MCF 10A (cell line): ENCODE measurements at regions of chr2 and their contacts with region 1.

Region 1: GRCh38 chr2:112836695-112837117 is at the start of gene IL1B:
- DNase-seq: peak; percentile 87
- H3K4me3 Mint-ChIP-seq: peak within 1 kb of the TSS; percentile 46
- H3K27ac Mint-ChIP-seq: peak within 1 kb of the TSS; percentile 60
- H3K4me1 Mint-ChIP-seq: peaks cover 50% of the 10 kb centered on the region
- H3K27me3 Mint-ChIP-seq: no peaks in the 10 kb centered on the region
- CTCF ChIP-seq: no peak
- total RNA-seq, gene IL1B: 5.4 and 5.5 TPM in 2 replicates

Region 2: DNA sequence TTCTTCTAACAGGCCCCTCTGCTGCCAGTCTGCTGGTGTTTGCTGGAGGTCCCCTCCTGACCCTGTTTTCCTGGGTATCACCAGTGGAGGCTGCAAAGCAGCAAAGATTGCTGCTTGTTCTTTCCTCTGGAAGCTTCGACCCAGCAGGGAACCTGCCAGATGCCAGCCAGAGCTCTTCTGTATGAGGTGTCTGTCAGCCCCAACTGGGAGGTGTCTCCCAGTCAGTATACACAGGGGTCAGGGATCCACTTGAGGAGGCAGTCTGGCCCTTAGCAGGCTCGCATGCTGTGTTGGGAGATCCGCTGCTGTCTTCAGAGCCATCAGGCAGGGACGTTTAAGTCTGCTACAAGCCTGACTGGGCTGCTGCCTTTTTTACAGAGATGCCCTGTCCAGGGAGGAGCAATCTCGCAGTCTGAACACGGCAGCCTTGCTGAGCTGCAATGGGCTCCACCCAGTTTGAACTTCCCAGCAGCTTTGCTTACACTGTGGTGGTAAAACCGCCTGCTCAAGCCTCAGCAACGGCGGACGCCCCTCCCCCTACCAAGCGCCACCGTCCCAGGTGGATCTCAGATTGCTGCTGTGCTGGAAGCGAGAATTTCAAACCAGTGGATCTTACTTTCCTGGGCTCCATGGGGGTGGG is 222.4 kb before region 1 on chr2:
- CTCF ChIA-PET with region 1: no interaction called
- POLR2A ChIA-PET with region 1: no interaction called
- intact Hi-C with region 1: no loop called
- DNase-seq: no peak
- H3K4me3 Mint-ChIP-seq: no peak overlapping the region
- H3K27ac Mint-ChIP-seq: no peak overlapping the region
- H3K4me1 Mint-ChIP-seq: no peaks in the 10 kb centered on the region
- H3K27me3 Mint-ChIP-seq: no peaks in the 10 kb centered on the region
- CTCF ChIP-seq: no peak

Region 3: DNA sequence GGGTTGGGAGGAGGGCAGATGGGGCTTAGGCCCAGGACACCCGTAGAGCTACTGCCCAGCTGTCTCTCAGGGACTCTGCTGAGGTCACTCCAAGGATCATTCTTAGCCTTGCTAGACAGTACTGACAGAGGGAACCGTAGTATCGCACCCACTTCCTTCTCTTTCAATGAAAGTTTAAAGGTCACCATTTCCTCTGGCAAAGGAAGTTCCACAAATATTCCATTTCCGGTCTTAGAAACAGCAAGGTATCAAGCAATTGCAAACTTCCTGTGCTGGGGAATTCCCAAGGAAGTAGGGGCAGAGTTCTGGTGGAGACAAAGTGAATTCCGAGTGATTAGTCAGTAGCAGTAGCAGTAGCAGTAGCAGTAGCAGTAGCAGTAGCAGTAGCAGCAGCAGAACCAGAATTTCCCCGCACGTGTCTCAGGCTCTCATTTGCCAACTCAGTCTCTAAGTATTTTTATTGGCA is 24.8 kb before region 1 on chr2:
- CTCF ChIA-PET with region 1: interaction called, 4 read pairs
- POLR2A ChIA-PET with region 1: interaction called, 20 read pairs
- intact Hi-C with region 1: no loop called
- DNase-seq: peak; percentile 82
- H3K4me3 Mint-ChIP-seq: no peak overlapping the region
- H3K27ac Mint-ChIP-seq: peak overlapping the region; percentile 97
- H3K4me1 Mint-ChIP-seq: peaks cover 46% of the 10 kb centered on the region
- H3K27me3 Mint-ChIP-seq: no peaks in the 10 kb centered on the region
- CTCF ChIP-seq: no peak

Region 4: GRCh38 chr2:112818094-112818902 is 18.4 kb before region 1 on chr2:
- CTCF ChIA-PET with region 1: interaction called, 4 read pairs
- POLR2A ChIA-PET with region 1: interaction called, 20 read pairs
- intact Hi-C with region 1: no loop called
- DNase-seq: no peak
- H3K4me3 Mint-ChIP-seq: no peak overlapping the region
- H3K27ac Mint-ChIP-seq: no peak overlapping the region
- H3K4me1 Mint-ChIP-seq: peaks cover 31% of the 10 kb centered on the region
- H3K27me3 Mint-ChIP-seq: no peaks in the 10 kb centered on the region
- CTCF ChIP-seq: no peak

Region 5: GRCh38 chr2:112848833-112849232 is 12.1 kb after region 1 on chr2:
- CTCF ChIA-PET with region 1: no interaction called
- POLR2A ChIA-PET with region 1: no interaction called
- intact Hi-C with region 1: no loop called
- DNase-seq: no peak
- H3K4me3 Mint-ChIP-seq: no peak overlapping the region
- H3K27ac Mint-ChIP-seq: no peak overlapping the region
- H3K4me1 Mint-ChIP-seq: no peaks in the 10 kb centered on the region
- H3K27me3 Mint-ChIP-seq: no peaks in the 10 kb centered on the region
- CTCF ChIP-seq: no peak